Activated CD8-positive, alpha-beta T cell treated with anti-CD3 and anti-CD28 coated beads for 36 hours (primary cell): ENCODE measurements at regions of chr12 and their contacts with region 1.

Region 1: GRCh38 chr12:111451649-111452129 is 46.0 kb downstream of the SH2B3 start:
- DNase-seq: no peak
- ATAC-seq: peak; percentile 53
- H3K4me3 Mint-ChIP-seq: no peak overlapping the region
- H3K27ac Mint-ChIP-seq: peak overlapping the region; percentile 21
- H3K4me1 Mint-ChIP-seq: peaks cover 40% of the 10 kb centered on the region
- H3K27me3 Mint-ChIP-seq: no peaks in the 10 kb centered on the region
- CTCF ChIP-seq: peak; percentile 92

Region 2: DNA sequence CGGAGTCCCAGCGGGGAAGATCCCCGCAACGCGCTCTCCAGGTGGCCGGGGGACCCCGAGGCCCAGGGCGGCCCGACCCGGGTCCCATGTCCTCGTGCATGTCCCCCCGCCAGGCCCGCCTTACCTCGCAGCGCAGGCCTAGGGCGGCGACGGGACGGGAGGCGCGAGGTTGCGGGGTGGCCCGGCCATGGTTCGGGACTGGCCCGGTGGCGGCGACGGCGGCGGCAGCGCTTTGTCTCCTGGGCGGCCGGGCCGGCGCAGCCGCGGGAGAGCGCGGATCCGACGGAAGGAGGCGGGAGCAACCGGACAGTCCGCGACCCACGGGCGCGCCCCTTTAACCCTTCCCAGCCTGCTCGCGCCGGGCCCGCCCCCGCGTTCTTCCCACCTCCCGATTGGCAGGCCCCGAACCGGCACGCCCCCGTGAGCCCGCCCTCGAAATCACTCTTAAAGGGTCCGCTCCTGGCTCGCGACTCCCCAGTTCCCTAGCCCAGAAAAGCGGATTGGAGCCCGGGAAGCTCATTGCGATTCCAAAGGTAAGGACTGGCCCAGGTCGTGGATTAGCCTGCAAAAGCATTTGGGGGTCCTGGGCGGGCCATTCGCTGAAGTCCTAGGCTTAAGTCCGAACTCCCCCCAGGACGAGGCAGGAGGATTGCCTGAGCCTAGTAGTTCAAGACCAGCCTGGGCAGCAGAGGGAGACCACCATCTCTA is 82.7 kb before region 1 on chr12 and contains the start of gene PHETA1:
- CTCF ChIA-PET with region 1: interaction called, 17 read pairs
- POLR2A ChIA-PET with region 1: interaction called, 3 read pairs
- intact Hi-C with region 1: no loop called
- DNase-seq: peak; percentile 88
- ATAC-seq: peak; percentile 92
- H3K4me3 Mint-ChIP-seq: peak within 1 kb of the TSS; percentile 73
- H3K27ac Mint-ChIP-seq: no peak within 1 kb of the TSS
- H3K4me1 Mint-ChIP-seq: peaks cover 12% of the 10 kb centered on the region
- H3K27me3 Mint-ChIP-seq: no peaks in the 10 kb centered on the region
- CTCF ChIP-seq: peak; percentile 21
- total RNA-seq, gene PHETA1: 1.2 to 1.7 TPM

Region 3: GRCh38 chr12:111419784-111420183 is 31.9 kb before region 1 on chr12:
- CTCF ChIA-PET with region 1: interaction called, 1,222 read pairs
- POLR2A ChIA-PET with region 1: interaction called, 7 read pairs
- intact Hi-C with region 1: no loop called
- DNase-seq: no peak
- ATAC-seq: no peak
- H3K4me3 Mint-ChIP-seq: no peak overlapping the region
- H3K27ac Mint-ChIP-seq: no peak overlapping the region
- H3K4me1 Mint-ChIP-seq: peaks cover 34% of the 10 kb centered on the region
- H3K27me3 Mint-ChIP-seq: no peaks in the 10 kb centered on the region
- CTCF ChIP-seq: no peak

Region 4: DNA sequence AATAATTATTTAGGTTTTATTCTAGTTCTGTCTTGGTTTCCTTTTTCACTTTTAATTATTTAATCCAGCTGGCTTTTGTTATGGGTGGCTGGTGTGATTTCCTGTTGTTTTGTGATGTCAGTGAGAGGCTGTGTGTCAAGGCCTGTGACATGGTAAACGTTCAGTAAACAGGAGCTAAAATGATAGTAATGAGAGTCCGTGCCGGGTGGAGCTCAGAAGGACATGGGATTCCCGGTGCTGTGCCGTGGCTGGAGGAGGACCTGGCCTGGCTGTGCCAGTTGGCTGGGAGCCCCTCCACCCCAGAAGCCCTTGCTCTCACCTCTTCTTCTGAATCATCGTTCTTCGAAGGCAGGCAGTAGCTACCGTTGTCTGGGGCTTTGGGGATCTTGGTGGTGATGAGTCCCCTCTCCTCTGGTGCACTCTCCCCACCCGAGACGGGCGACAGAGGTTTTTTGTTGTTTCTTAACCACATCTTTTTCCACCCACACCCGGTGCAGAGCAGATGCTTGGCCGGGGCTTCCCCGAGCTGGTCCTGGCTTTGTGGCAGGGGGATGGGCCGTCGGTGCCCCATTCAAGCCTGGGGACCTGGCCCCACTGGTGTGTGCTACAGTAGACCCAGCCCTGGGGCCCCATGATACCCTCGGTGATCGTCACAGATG is 16.9 kb before region 1 on chr12:
- CTCF ChIA-PET with region 1: interaction called, 44 read pairs
- POLR2A ChIA-PET with region 1: interaction called, 9 read pairs
- intact Hi-C with region 1: no loop called
- DNase-seq: peak; percentile 94
- ATAC-seq: peak; percentile 73
- H3K4me3 Mint-ChIP-seq: peak overlapping the region; percentile 62
- H3K27ac Mint-ChIP-seq: peak overlapping the region; percentile 95
- H3K4me1 Mint-ChIP-seq: peaks cover 86% of the 10 kb centered on the region
- H3K27me3 Mint-ChIP-seq: no peaks in the 10 kb centered on the region
- CTCF ChIP-seq: no peak

Region 5: DNA sequence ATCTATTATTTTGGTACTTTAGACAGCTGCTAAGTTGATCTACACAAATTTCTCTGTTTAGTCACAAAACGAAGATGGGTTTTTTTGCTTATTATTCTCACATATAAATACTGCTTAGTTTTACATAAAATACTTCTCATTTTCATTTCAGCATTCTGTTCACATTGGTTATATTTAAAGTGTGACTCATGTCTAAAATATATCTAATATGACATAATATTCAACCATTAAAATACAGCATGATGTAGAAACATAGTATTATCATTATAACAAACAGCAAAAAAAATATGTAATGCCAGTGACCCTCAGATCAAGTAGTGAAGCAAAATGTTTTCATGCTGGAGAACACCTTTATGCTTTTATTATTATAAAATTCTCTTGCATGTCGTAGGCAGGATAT is 17.7 kb after region 1 on chr12:
- CTCF ChIA-PET with region 1: interaction called, 46 read pairs
- POLR2A ChIA-PET with region 1: interaction called, 4 read pairs
- intact Hi-C with region 1: no loop called
- DNase-seq: no peak
- ATAC-seq: no peak
- H3K4me3 Mint-ChIP-seq: no peak overlapping the region
- H3K27ac Mint-ChIP-seq: no peak overlapping the region
- H3K4me1 Mint-ChIP-seq: peaks cover 7% of the 10 kb centered on the region
- H3K27me3 Mint-ChIP-seq: no peaks in the 10 kb centered on the region
- CTCF ChIP-seq: no peak

Region 6: GRCh38 chr12:111529424-111530368 is 78.0 kb after region 1 on chr12:
- CTCF ChIA-PET with region 1: interaction called, 17 read pairs
- POLR2A ChIA-PET with region 1: no interaction called
- intact Hi-C with region 1: no loop called
- DNase-seq: peak; percentile 72
- ATAC-seq: peak; percentile 94
- H3K4me3 Mint-ChIP-seq: no peak overlapping the region
- H3K27ac Mint-ChIP-seq: peak overlapping the region; percentile 1
- H3K4me1 Mint-ChIP-seq: peaks cover 12% of the 10 kb centered on the region
- H3K27me3 Mint-ChIP-seq: no peaks in the 10 kb centered on the region
- CTCF ChIP-seq: peak; percentile 77